Calu3 (cell line): ENCODE measurements at regions of chr11 and their contacts with region 1.

Region 1: DNA sequence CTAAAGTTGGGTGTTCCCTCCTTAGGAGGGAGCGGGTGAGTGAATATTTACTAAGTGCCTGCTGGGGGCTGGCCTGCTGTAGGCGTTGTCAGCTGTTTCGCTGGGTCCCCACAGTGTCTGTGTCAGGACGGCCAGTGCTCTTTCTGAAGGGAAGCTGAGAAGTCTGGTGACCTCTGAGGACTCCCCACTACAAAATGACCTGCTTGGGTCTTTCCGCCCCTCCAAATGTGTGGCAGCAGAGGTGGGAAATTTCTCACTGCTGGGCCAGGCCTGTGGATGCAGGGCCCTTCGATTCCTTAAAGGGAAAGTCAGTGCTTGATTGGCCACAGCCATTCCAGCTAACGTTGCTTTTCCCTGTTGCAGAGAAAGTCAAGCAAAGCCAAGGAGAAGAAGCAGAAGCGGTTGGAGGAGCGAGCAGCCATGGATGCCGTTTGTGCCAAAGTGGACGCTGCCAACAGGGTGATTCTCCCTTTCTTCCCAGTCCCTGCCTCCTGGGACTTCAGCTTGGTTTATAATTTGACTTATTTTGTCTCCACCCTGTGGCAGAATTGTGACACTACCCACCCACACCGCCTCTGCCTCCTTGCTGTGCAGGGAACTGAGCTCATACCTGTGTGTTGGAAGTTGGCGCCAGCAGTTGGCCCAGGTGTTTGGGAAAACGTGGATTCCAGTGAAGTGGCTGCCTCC is 6.8 kb downstream of the NAA40 start:
- DNase-seq: peak; percentile 73
- H3K4me3 Mint-ChIP-seq: no peak overlapping the region
- H3K27ac Mint-ChIP-seq: no peak overlapping the region
- H3K4me1 Mint-ChIP-seq: no peaks in the 10 kb centered on the region
- H3K27me3 Mint-ChIP-seq: no peaks in the 10 kb centered on the region
- CTCF ChIP-seq: peak; percentile 50

Region 2: DNA sequence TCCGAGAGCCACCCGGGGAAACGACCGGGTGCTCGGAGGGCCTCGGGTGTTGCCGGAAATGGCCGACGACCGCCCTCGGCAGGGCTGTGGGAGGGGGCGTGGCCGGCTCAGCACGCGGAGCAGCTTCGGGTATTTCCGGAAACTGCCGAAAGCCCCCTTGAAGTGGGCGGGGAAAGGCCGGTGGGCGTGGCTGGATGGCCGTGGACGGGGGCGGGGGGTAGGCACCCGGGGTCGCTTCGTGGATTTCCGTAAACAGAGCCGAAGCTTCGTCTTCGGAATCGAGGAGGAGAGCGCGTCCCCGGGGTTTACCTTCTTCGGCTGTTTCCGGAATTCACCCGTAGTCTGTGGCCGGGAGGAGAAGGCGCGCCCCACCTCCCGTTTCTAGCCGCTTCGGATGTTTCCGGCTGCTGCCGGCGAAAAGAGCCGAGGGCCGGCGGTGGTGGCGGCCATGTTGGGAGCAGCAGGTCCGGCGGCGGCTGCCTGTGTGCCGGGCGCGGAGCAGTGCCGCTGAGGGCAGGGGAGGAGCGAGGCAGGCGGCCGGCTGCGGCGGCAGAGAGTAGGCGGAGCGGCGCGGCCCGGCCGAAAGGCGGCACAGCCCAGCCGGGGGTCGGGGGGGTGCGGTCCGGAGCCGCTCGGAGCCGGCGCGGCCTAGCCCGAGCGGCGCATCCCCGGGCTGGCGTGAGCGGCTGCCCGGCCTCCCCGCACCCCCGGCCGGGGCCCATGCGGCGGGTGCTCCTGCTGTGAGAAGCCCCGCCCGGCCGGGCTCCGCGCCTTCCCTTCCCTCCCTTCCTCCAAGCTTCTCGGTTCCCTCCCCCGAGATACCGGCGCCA is 106.7 kb before region 1 on chr11 and contains the start of gene MARK2:
- CTCF ChIA-PET with region 1: interaction called, 38 read pairs
- intact Hi-C with region 1: loop called (anchors 1 kb)
- DNase-seq: peak; percentile 99
- H3K4me3 Mint-ChIP-seq: peak within 1 kb of the TSS; percentile 75
- H3K27ac Mint-ChIP-seq: peak within 1 kb of the TSS; percentile 38
- H3K4me1 Mint-ChIP-seq: peaks cover 48% of the 10 kb centered on the region
- H3K27me3 Mint-ChIP-seq: no peaks in the 10 kb centered on the region
- CTCF ChIP-seq: no peak
- total RNA-seq, gene MARK2: 63.1 and 71.2 TPM in 2 replicates

Region 3: GRCh38 chr11:63847363-63847762 is 98.3 kb before region 1 on chr11:
- CTCF ChIA-PET with region 1: interaction called, 10 read pairs
- intact Hi-C with region 1: no loop called
- DNase-seq: peak; percentile 70
- H3K4me3 Mint-ChIP-seq: peak overlapping the region; percentile 18
- H3K27ac Mint-ChIP-seq: peak overlapping the region; percentile 81
- H3K4me1 Mint-ChIP-seq: peaks cover 44% of the 10 kb centered on the region
- H3K27me3 Mint-ChIP-seq: no peaks in the 10 kb centered on the region
- CTCF ChIP-seq: no peak

Region 4: DNA sequence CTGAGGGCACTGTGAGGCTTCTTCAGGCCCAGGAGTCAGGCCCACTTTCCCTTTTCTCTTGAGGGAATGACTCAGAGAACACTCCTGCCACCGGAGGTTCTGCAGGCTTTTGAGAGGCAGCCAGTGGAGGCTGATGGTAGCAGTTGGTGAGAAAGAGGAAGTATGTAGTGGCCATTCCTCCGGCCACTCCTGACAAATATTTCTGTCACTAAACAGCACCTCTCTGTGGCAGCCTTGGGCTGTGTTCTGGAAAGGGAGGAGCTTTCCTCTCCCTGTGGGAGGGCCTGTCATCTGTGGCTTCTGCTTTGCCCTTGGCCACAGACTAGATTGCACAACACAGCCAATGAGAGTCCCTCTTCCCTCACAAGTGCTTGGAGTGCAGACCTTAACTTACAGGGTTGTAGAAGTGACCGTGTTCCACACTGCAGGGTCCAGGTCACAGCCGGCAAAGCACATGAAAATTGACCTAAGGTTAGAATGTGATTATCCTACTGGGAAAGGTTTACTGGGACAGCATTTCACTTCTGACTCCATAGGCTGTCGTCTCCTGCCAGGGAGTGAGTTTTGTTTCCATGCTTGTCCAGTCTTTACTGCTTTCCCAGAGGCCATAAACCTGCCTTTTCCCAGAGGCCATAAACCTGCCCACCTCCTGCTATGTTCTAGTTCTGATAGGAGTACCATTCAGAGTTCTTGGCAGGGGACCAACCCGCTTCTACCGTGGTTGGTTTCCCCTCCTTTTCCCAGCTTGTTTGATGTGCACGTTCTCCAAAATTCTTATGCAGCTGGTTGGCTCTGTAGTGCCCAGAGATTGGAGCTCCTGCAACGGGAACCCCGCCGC is 73.4 kb before region 1 on chr11:
- CTCF ChIA-PET with region 1: interaction called, 10 read pairs
- intact Hi-C with region 1: no loop called
- DNase-seq: peak; percentile 83
- H3K4me3 Mint-ChIP-seq: peak overlapping the region; percentile 39
- H3K27ac Mint-ChIP-seq: no peak overlapping the region
- H3K4me1 Mint-ChIP-seq: peaks cover 42% of the 10 kb centered on the region
- H3K27me3 Mint-ChIP-seq: no peaks in the 10 kb centered on the region
- CTCF ChIP-seq: no peak

Region 5: DNA sequence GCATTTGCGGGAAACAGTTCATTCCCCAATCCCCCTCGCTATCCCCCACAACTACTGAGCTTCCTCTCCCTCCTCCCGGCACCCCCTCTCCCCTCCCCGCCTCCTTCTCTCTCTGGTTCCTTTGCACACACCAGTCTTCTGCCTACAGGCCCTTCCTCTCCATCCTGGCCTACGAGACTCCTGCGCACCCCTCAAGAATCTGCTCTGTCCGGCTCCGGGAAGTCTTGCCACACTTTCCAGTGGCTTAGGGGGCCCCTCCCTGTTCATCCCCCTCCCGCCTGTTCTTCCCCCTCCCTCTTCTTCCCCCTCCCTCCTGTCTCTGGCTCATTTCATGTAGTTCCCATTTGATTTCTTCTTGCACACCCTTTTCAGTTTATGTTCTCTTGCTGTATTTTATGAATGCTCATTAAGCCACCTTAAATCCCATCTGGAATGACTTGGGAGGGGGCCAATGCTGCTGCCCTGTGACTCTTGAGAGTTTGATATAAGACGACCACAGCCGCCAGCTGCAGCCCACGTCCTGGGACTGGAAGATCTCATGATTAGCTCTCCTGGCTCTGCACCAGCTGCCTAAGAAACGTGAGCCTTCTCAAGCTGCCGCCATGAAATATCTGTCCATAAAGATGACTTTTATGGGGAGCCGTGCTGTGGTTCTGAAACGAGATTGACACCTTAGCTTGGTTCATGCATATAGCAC is 464.2 kb after region 1 on chr11:
- CTCF ChIA-PET with region 1: no interaction called
- intact Hi-C with region 1: no loop called
- DNase-seq: no peak
- H3K4me3 Mint-ChIP-seq: no peak overlapping the region
- H3K27ac Mint-ChIP-seq: no peak overlapping the region
- H3K4me1 Mint-ChIP-seq: no peaks in the 10 kb centered on the region
- H3K27me3 Mint-ChIP-seq: peaks cover 44% of the 10 kb centered on the region
- CTCF ChIP-seq: no peak